Activated B cell treated with CpG ODN at 0.5 μM for 24 hours (primary cell): ENCODE measurements at regions of chr17 and their contacts with region 1.

Region 1: GRCh38 chr17:77444984-77445759 is 304.4 kb downstream of the SEC14L1 start:
- DNase-seq: peak; percentile 70
- ATAC-seq: peak; percentile 45
- H3K4me3 Mint-ChIP-seq: peak overlapping the region; percentile 80
- H3K27ac Mint-ChIP-seq: peak overlapping the region; percentile 94
- H3K4me1 Mint-ChIP-seq: peaks cover 96% of the 10 kb centered on the region
- H3K27me3 Mint-ChIP-seq: no peaks in the 10 kb centered on the region
- CTCF ChIP-seq: no peak

Region 2: DNA sequence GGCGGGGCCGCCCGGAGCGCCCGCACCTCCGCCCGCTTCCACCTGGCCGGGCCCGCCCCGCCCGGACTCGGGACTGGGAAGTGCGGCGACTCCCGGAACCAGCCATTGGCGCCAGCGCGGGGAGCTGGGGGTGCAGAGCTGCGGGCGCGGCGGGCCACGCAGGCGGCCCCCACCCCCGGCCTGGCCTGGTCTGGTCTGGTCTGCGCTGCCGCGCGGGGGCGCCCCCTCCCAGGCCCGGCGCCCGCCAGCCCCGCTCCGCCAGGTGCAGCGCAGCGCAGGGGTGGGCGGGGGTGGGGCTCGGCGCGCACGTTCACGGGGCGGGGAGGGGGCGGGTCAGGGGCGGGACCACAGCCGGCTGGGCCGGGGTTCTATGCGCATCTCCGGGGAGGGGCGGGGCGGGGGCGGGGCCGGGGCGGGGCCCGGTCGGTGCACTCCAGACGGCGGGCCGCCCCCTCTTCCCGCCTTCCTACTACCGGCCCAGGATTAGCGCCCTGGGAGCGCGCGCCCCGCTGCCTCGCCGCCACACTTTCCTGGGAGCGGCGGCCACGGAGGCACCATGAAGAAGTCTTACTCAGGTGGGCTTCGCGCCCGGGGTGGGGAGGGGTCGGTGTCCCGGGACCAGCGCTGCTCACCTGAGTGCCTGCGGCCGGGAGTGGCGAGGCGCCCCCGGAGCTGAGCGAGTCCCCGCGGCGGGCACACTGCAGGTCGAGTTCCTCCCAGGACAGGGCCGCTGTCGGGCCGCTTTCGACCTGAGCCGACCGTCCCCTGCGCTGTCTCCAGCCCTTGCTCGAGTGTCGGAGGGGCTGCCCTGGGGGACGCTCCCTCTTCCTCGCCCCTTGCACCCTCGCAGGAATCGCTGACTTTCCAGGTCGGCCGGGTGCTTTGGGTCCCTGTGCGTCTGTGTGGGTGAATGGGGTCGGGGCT is 163.9 kb before region 1 on chr17:
- CTCF ChIA-PET with region 1: interaction called, 5 read pairs
- POLR2A ChIA-PET with region 1: no interaction called
- intact Hi-C with region 1: loop called (anchors 2 kb)
- DNase-seq: peak; percentile 74
- ATAC-seq: peak; percentile 93
- H3K4me3 Mint-ChIP-seq: peak overlapping the region; percentile 82
- H3K27ac Mint-ChIP-seq: peak overlapping the region; percentile 85
- H3K4me1 Mint-ChIP-seq: peaks cover 30% of the 10 kb centered on the region
- H3K27me3 Mint-ChIP-seq: peaks cover 4% of the 10 kb centered on the region
- CTCF ChIP-seq: no peak

Region 3: GRCh38 chr17:77331301-77331864 is 113.8 kb before region 1 on chr17:
- CTCF ChIA-PET with region 1: interaction called, 7 read pairs
- POLR2A ChIA-PET with region 1: interaction called, 87 read pairs
- intact Hi-C with region 1: no loop called
- DNase-seq: peak; percentile 90
- ATAC-seq: peak; percentile 91
- H3K4me3 Mint-ChIP-seq: peak overlapping the region; percentile 76
- H3K27ac Mint-ChIP-seq: peak overlapping the region; percentile 78
- H3K4me1 Mint-ChIP-seq: peaks cover 57% of the 10 kb centered on the region
- H3K27me3 Mint-ChIP-seq: no peaks in the 10 kb centered on the region
- CTCF ChIP-seq: peak; percentile 32

Region 4: DNA sequence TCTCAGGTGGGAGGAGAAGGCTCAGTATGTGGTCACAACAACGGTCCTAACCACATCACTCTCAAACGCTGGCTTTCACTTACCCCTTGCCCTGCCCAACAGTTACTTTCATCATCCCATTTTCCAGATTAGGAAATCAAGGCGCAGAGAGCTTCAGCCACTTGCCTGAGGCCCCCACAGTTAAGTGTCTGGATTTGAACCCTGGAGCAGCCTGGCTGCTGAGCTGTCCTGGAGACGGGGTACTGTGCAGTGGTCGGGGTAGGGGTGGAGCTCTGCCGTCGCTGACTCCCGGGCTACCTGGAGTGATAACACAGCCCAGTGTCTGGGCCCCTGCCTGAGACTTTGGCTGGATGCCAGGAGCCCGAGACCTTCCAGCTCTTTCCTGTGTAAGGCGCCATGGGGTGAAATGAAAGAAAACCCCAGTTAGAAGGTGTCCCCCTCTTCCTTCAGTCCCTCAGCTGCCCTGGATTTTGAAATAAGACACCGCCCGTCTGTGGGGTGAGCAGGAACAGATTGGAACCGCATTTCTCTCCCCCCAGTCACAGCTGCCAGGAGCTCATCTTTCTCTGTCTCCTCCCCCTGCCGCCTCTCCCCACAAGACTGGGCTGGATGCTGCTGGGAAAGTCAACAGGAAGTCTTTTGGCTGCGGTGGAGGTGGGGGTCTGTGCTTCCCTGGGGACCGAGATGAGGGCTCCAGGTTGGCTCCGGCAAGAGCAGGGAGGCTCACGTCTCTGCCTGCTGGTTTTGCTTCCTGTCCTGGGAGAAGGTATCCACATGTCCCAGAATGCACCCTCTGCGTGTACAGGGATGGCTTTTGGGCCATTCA is 24.2 kb before region 1 on chr17:
- CTCF ChIA-PET with region 1: no interaction called
- POLR2A ChIA-PET with region 1: interaction called, 325 read pairs
- intact Hi-C with region 1: no loop called
- DNase-seq: no peak
- ATAC-seq: peak; percentile 49
- H3K4me3 Mint-ChIP-seq: peak overlapping the region; percentile 73
- H3K27ac Mint-ChIP-seq: peak overlapping the region; percentile 55
- H3K4me1 Mint-ChIP-seq: peaks cover 33% of the 10 kb centered on the region
- H3K27me3 Mint-ChIP-seq: no peaks in the 10 kb centered on the region
- CTCF ChIP-seq: no peak

Region 5: GRCh38 chr17:77471984-77472461 is 26.9 kb after region 1 on chr17:
- CTCF ChIA-PET with region 1: interaction called, 7 read pairs
- POLR2A ChIA-PET with region 1: interaction called, 831 read pairs
- intact Hi-C with region 1: loop called (anchors 1 kb)
- DNase-seq: no peak
- ATAC-seq: no peak
- H3K4me3 Mint-ChIP-seq: peak overlapping the region; percentile 72
- H3K27ac Mint-ChIP-seq: peak overlapping the region; percentile 84
- H3K4me1 Mint-ChIP-seq: peaks cover 97% of the 10 kb centered on the region
- H3K27me3 Mint-ChIP-seq: no peaks in the 10 kb centered on the region
- CTCF ChIP-seq: no peak

Region 6: GRCh38 chr17:77881545-77881944 is 436.4 kb after region 1 on chr17:
- CTCF ChIA-PET with region 1: no interaction called
- POLR2A ChIA-PET with region 1: no interaction called
- intact Hi-C with region 1: loop called (anchors 10 kb)
- DNase-seq: peak; percentile 82
- ATAC-seq: peak; percentile 86
- H3K4me3 Mint-ChIP-seq: peak overlapping the region; percentile 76
- H3K27ac Mint-ChIP-seq: peak overlapping the region; percentile 86
- H3K4me1 Mint-ChIP-seq: peaks cover 82% of the 10 kb centered on the region
- H3K27me3 Mint-ChIP-seq: peaks cover 6% of the 10 kb centered on the region
- CTCF ChIP-seq: no peak